PC-3 (cell line): ENCODE measurements at regions of chr12 and their contacts with region 1.

Region 1: GRCh38 chr12:22529281-22530060 is 14.9 kb downstream of the C2CD5 start:
- DNase-seq: peak; percentile 55
- ATAC-seq: peak; percentile 61
- H3K4me3 ChIP-seq: no peak overlapping the region
- H3K27ac ChIP-seq: no peak overlapping the region
- H3K4me1 ChIP-seq: peaks cover 29% of the 10 kb centered on the region
- H3K27me3 ChIP-seq: no peaks in the 10 kb centered on the region
- CTCF ChIP-seq: peak; percentile 70

Region 2: GRCh38 chr12:22670762-22671161 is 141.3 kb after region 1 on chr12:
- CTCF ChIA-PET with region 1: no interaction called
- POLR2A ChIA-PET with region 1: no interaction called
- intact Hi-C with region 1: loop called (anchors 5 kb)
- DNase-seq: no peak
- ATAC-seq: no peak
- H3K4me3 ChIP-seq: no peak overlapping the region
- H3K27ac ChIP-seq: no peak overlapping the region
- H3K4me1 ChIP-seq: peaks cover 12% of the 10 kb centered on the region
- H3K27me3 ChIP-seq: no peaks in the 10 kb centered on the region
- CTCF ChIP-seq: peak; percentile 61